ENCODE measurements at regions of chr22 and their contacts with region 1.

Region 1: DNA sequence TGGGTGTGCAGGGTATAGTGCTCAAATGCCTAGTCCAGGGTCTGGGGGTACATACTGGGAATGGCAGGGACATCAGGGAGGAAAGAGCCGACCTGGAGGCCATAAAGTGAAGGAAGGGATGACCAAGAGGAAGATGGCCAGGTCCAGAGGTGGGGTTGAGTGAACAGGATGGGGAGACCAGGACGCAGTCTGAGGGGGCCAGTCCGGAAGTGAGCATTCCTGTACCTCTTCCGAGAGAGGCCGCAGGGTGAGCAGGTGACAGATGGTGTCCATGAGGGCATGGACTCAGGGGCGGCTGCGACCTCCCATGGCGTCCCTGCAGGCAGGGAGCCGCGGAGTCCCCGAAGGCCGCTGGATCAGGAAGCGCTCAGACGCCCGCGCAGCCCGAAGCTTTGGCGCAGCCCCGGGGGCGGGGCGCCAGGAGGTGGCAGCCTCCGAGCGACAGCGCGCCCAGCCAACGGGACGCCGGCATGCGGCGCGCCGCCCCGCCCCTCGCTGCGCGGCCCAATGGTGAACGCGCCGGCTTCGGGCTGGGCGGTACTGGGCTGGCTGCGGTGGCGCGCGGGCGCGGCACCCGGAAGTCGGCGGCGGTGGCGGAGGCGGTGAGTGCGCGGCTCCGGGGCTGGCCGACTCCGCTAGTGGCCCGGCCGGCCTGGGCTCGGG is at the start of gene TANGO2:
- DNase-seq: peak; percentile 93
- H3K4me3 ChIP-seq: peak within 1 kb of the TSS; percentile 72 to 99 (median 98)
- H3K27ac ChIP-seq: peak within 1 kb of the TSS; percentile 94 to 96 (median 96)
- H3K4me1 ChIP-seq: peaks cover 18 to 35% of the 10 kb centered on the region in 2 donors
- H3K27me3 ChIP-seq: no peaks in the 10 kb centered on the region
- CTCF ChIP-seq: no peak
- POLR2A ChIP-seq: peak; percentile 89 to 96
- total RNA-seq, gene TANGO2: 50.3 to 82.7 (median 65.2) TPM

Region 2: DNA sequence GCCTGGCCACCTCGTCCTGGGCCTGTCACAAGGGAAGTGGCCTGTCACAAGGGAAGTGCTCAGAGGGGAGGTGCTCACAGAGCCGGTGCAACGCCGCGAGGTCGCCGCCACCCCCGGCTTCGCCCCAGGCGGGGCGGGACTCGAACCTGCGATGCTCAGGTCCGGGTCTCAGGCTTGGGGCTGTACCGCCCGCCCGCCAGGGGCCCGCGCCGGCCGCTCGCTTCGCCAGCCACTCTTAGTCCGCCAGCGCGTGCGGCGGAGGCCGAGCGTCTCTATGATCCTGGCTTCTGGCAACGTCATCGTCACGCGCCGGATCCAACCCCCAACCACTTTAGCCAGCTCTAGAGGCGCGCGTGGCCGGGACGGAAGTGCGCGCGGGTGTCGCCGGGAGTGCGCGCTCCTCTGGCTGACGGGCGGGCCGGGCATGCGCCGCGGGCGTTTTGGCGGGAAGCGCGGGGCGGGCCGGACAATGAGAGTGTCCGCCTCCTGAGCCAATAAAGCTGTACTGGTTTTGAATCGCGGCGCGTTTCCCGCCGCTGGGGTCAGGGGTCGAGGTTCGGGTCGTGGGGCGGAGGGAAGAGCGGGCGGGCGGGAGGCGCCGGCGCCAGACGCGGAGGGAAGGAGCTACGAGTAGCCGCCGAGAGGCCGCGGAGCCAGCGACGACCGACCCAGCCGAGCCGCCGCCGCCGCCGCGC is 96.4 kb after region 1 on chr22 and contains the start of gene TRMT2A:
- intact Hi-C with region 1: loop called (anchors 10 kb)
- DNase-seq: peak; percentile 98 to 99
- H3K4me3 ChIP-seq: peak within 1 kb of the TSS; percentile 62 to 73 (median 69)
- H3K27ac ChIP-seq: peak within 1 kb of the TSS; percentile 73 to 85 (median 77)
- H3K4me1 ChIP-seq: peaks cover 11 to 17% of the 10 kb centered on the region in 2 donors
- H3K27me3 ChIP-seq: no peaks in the 10 kb centered on the region
- CTCF ChIP-seq: peak in 1 of 6 experiments; percentile 34
- POLR2A ChIP-seq: peak in 1 of 2 donors; percentile 59
- total RNA-seq, gene TRMT2A: 36.9 to 65.5 (median 53.3) TPM

Measured in thyroid gland (tissue), 4 donors.